ENCODE measurements at regions of chr3 and their contacts with region 1.

Region 1: DNA sequence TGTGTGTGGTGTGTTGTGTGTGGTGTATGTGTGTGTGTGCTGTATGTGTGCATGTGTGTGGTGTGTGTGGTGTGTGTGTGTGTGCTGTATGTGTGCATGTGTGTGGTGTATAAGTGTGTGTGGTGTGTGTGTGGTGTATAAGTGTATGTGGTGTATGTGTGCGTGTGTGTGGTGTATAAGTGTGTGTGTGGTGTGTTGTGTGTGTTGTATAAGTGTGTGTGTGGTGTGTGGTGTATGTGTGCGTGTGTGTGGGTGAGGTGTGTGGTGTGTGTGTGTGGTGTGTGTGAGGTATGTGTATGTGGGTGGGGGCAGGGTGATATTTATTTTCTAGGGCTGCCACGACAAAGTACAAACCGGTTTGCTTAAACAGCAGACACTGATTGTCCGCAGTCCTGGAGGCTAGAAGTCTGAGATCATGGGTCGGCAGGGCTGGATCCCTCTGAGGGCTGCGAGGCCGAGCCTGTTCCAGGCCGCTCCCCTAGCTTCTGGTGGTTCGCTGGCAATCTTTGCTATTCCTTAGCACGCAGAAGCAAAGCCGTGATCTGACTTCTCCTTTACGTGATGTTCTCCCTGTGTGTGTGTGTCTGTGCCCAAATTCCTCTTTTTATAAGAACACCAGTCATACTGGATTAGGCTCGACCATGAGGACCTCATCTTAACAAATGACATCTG is 160.2 kb downstream of the XXYLT1 start:
- DNase-seq: no peak
- H3K4me3 ChIP-seq: no peak overlapping the region
- CTCF ChIP-seq: no peak

Region 2: DNA sequence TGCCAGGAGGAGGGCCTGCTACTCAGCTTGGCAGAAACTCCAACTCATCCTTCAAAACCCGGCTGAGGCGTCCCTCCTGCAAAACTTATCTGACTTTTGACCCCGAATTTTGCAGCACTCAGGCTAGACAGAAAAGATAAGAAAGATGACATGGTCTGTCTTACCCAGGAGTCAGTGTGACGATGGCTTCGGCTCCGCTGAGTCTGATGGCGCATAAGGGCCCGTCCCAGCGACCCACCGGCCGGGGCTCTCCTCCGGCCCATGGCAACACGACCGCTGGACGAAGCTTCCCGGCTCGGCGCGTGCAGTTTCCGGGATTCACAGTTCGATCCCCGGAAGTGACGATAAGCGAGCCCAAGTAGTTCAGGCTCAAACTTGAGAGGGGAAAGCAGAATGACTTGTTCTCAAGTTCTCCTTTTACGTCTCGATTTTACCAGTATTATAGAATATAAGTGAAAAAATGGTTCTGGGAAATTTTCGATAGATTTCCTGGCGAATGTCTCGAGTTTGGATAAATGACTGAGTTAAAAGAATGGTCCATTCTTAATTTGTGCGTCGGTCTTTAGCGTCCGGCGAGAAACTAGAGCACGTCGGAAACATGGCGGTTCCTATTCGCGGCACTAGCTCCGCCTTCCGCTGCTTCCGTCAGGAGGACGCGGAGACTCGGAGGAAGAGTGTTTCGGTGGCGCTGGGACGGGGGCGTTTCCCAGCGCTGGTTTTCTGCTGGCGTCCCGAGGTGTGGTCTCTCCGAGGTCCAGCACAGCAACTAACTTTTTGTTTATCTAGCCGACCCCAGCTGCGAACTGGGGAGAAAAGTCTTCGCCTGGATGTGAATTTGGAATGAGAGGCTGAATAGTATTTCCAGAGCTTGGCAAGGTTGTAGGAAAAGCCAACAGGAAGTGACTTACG is 438.6 kb before region 1 on chr3 and contains the start of gene LSG1:
- in situ Hi-C with region 1: loop called (anchors 5 kb)
- DNase-seq: peak; percentile 93
- H3K4me3 ChIP-seq: peak within 1 kb of the TSS; percentile 87
- CTCF ChIP-seq: no peak

Measured in astrocyte of the cerebellum (primary cell).